Activated naive CD4-positive, alpha-beta T cell treated with anti-CD3 and anti-CD28 coated beads for 36 hours (primary cell): ENCODE measurements at regions of chr15 and their contacts with region 1.

Region 1: DNA sequence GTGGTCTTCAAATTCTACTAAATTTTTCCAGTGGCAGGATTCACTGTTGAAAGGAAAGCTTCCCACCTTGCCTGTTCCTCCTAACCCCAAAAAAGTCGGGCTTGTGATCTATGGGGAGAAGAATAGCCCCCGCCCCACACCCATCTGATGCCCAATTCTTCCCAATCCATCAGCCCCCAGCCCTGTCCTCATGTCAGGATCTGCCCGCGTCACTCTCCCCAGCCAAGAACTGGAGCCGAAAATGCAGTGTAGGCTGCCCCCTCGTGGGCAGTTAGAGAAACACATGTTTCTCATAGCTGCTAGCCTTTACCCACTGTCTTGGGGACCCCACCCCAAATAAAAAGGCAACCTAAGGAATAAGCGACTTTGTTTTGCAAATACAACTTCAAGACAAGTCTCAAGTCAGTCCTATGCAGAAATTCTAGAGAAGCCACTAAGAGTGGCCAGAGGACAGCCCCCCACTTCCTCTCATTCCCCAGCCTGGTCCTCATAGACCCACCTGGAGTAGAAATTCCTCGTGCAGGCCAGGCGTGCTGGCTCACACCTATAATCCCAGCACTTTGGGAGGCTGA is 13.0 kb upstream of the CSK start:
- DNase-seq: peak; percentile 80
- H3K4me3 Mint-ChIP-seq: no peak overlapping the region
- H3K27ac Mint-ChIP-seq: peak overlapping the region; percentile 25
- H3K4me1 Mint-ChIP-seq: peaks cover 24% of the 10 kb centered on the region
- H3K27me3 Mint-ChIP-seq: no peaks in the 10 kb centered on the region

Region 2: GRCh38 chr15:74373731-74374647 is 394.9 kb before region 1 on chr15:
- CTCF ChIA-PET with region 1: interaction called, 4 read pairs
- intact Hi-C with region 1: loop called (anchors 1 kb)
- DNase-seq: peak; percentile 97
- H3K4me3 Mint-ChIP-seq: peak overlapping the region; percentile 75
- H3K27ac Mint-ChIP-seq: no peak overlapping the region
- H3K4me1 Mint-ChIP-seq: peaks cover 31% of the 10 kb centered on the region
- H3K27me3 Mint-ChIP-seq: peaks cover 1% of the 10 kb centered on the region

Region 3: DNA sequence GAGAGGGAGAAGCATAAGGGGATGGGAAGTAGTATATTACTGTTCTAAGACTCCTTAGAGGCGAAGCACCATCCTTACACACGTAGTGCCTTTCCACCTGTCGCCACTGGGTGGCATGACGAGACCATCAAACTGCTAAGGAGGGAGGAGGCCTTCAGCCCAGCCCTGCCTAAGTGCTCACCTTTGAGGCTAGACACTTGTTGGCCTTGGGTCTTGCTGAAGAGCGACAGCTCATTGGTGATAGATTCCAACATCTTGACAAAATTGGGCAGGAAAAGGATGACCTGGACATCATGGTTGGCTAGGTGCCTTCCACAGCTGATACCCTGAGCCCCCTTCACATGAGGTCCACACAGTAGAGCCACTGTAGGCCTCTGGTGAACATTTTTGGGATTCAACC is 133.6 kb before region 1 on chr15:
- CTCF ChIA-PET with region 1: interaction called, 309 read pairs
- intact Hi-C with region 1: loop called (anchors 1 kb)
- DNase-seq: peak; percentile 86
- H3K4me3 Mint-ChIP-seq: no peak overlapping the region
- H3K27ac Mint-ChIP-seq: no peak overlapping the region
- H3K4me1 Mint-ChIP-seq: no peaks in the 10 kb centered on the region
- H3K27me3 Mint-ChIP-seq: no peaks in the 10 kb centered on the region

Region 4: GRCh38 chr15:74758736-74759135 is 10.1 kb before region 1 on chr15:
- CTCF ChIA-PET with region 1: interaction called, 12 read pairs
- intact Hi-C with region 1: no loop called
- DNase-seq: no peak
- H3K4me3 Mint-ChIP-seq: no peak overlapping the region
- H3K27ac Mint-ChIP-seq: no peak overlapping the region
- H3K4me1 Mint-ChIP-seq: no peaks in the 10 kb centered on the region
- H3K27me3 Mint-ChIP-seq: peaks cover 2% of the 10 kb centered on the region

Region 5: GRCh38 chr15:74835307-74835823 is 66.5 kb after region 1 on chr15:
- CTCF ChIA-PET with region 1: interaction called, 35 read pairs
- intact Hi-C with region 1: loop called (anchors 1 kb)
- DNase-seq: peak; percentile 72
- H3K4me3 Mint-ChIP-seq: no peak overlapping the region
- H3K27ac Mint-ChIP-seq: no peak overlapping the region
- H3K4me1 Mint-ChIP-seq: peaks cover 3% of the 10 kb centered on the region
- H3K27me3 Mint-ChIP-seq: no peaks in the 10 kb centered on the region

Region 6: GRCh38 chr15:74950078-74951000 is 181.5 kb after region 1 on chr15:
- CTCF ChIA-PET with region 1: interaction called, 56 read pairs
- intact Hi-C with region 1: loop called (anchors 1 kb)
- DNase-seq: peak; percentile 92
- H3K4me3 Mint-ChIP-seq: no peak overlapping the region
- H3K27ac Mint-ChIP-seq: no peak overlapping the region
- H3K4me1 Mint-ChIP-seq: peaks cover 10% of the 10 kb centered on the region
- H3K27me3 Mint-ChIP-seq: no peaks in the 10 kb centered on the region